Dorsolateral prefrontal cortex (tissue), 120 donors: ENCODE measurements at regions of chr10 and their contacts with region 1.

Region 1: GRCh38 chr10:32346134-32346550 is 816 bp downstream of the EPC1 start:
- DNase-seq: peak; percentile 89 to 96 (median 94)
- H3K4me3 ChIP-seq: peak overlapping the region; percentile 67 to 99 (median 91)
- H3K27ac ChIP-seq: peak overlapping the region; percentile 100
- H3K27me3 ChIP-seq: no peaks in the 10 kb centered on the region
- CTCF ChIP-seq: peak; percentile 69 to 99 (median 95)

Region 2: DNA sequence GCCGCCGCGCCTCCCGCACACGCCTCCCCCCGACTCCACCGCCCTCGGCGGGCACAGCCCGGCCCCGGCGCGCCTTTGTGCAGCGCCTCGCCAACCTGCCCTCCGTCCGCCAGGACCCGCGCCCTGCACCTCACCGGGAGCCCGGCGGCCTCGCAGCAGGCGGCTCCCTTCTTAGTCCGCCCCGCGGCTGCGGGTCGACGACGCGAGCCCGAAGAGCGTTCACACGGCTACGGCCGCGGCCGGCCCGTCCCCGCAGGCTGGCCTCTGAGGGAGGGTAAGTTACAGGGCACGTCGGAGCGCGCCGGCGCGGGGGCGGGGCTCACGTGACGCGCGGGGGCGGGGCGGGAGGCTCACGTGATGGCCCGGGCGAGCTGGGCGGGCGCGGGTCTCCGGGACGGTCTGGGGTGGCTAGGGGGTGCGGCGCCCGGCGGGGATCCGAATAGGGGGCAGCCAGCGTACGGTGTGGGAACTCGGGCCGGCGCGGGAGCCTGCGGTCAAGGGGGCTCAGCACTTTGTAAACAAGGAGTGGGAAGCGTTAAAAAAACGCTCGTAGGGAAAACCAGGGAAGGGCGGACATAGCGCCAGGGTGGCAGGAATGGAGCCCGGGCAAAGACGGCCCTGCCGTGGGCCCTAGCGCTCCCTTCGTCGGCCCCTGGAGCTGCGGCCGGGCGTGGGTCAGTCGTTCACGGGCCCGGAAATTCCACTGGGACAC is 417.4 kb before region 1 on chr10 and contains the start of gene ARHGAP12:
- intact Hi-C with region 1: loop called in 1 of 2 experiments (anchors 10 kb)
- DNase-seq: peak; percentile 71 to 91 (median 80)
- H3K4me3 ChIP-seq: peak within 1 kb of the TSS; percentile 55 to 96 (median 86)
- H3K27ac ChIP-seq: peak within 1 kb of the TSS; percentile 66 to 98 (median 92)
- H3K27me3 ChIP-seq: no peaks in the 10 kb centered on the region
- CTCF ChIP-seq: peak in 10 of 56 donors; percentile 2 to 46 (median 11)
- total RNA-seq, gene ARHGAP12: 27.1 to 48.7 (median 38.6) TPM

Region 3: GRCh38 chr10:32190890-32191491 is 155.2 kb before region 1 on chr10:
- intact Hi-C with region 1: loop called in 1 of 2 experiments (anchors 5 kb)
- DNase-seq: no peak
- H3K4me3 ChIP-seq: peak overlapping the region in 2 of 59 donors; percentile 5 to 7
- H3K27ac ChIP-seq: peak overlapping the region in 4 of 59 donors; percentile 7 to 34 (median 19)
- H3K27me3 ChIP-seq: no peaks in the 10 kb centered on the region
- CTCF ChIP-seq: peak; percentile 63 to 94 (median 82)

Region 4: GRCh38 chr10:32367793-32368453 is 21.8 kb after region 1 on chr10:
- intact Hi-C with region 1: loop called in 1 of 2 experiments (anchors 2 kb)
- DNase-seq: peak in 9 of 10 donors; percentile 39 to 69 (median 60)
- H3K4me3 ChIP-seq: peak overlapping the region in 44 of 59 donors; percentile 2 to 52 (median 28)
- H3K27ac ChIP-seq: peak overlapping the region in 42 of 59 donors; percentile 1 to 80 (median 48)
- H3K27me3 ChIP-seq: no peaks in the 10 kb centered on the region
- CTCF ChIP-seq: peak; percentile 78 to 98 (median 88)

Region 5: GRCh38 chr10:32445740-32446535 is 99.8 kb after region 1 on chr10 and contains the start of gene CCDC7:
- intact Hi-C with region 1: loop called (anchors 1 kb)
- DNase-seq: peak; percentile 52 to 89 (median 74)
- H3K4me3 ChIP-seq: peak within 1 kb of the TSS; percentile 59 to 94 (median 84)
- H3K27ac ChIP-seq: peak within 1 kb of the TSS; percentile 66 to 99 (median 96)
- H3K27me3 ChIP-seq: no peaks in the 10 kb centered on the region
- CTCF ChIP-seq: peak; percentile 13 to 78 (median 59)
- total RNA-seq, gene CCDC7: 53.8 to 143 (median 87.0) TPM